Activated CD4-positive, alpha-beta T cell treated with anti-CD3 and anti-CD28 coated beads for 36 hours (primary cell): ENCODE measurements at regions of chr19 and their contacts with region 1.

Region 1: DNA sequence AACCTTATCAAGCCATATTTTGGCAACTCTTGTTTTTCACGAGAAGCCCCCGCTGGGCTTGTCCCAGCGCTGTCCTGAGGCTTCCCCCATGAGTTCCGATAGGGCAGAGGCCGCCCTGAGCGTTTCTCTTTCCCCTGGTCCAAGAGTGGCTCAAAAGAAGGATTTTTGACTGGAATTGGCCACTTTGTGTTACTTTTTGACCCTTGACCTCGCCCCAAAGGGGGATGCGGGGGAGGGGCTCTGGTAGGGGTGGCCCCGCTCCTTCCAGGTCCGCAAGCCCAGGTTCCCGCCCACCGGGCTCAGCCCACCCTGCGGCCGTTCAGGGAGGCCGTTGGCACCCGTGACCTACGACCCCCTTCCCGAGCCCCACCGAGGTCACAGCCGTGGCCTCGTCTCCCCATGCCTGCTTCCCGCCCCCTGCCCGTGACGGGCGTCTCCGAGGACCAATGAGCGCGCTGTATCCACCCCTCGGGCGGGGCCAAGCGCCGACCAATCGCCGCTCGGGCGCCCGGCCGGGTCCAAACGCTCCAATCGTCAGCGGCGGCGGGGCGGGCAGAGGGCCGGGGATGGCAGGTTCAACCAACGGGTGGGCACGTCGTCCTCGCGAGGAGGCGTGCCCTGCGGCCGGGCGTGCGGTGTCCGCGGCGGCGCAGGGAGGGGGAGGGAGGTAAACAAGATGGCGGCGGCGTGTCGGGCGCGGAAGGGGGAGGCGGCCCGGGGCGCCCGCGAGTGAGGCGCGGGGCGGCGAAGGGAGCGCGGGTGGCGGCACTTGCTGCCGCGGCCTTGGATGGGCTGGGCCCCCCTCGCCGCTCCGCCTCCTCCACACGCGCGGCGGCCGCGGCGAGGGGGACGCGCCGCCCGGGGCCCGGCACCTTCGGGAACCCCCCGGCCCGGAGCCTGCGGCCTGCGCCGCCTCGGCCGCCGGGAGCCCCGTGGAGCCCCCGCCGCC is at the start of gene STK11:
- DNase-seq: peak; percentile 100
- ATAC-seq: peak; percentile 97
- H3K4me3 Mint-ChIP-seq: peak within 1 kb of the TSS; percentile 93
- H3K27ac Mint-ChIP-seq: peak within 1 kb of the TSS; percentile 77
- H3K4me1 Mint-ChIP-seq: peaks cover 23% of the 10 kb centered on the region
- H3K27me3 Mint-ChIP-seq: no peaks in the 10 kb centered on the region
- total RNA-seq, gene STK11: 49.2 to 61.5 TPM

Region 2: GRCh38 chr19:1082172-1082927 is 123.0 kb before region 1 on chr19:
- CTCF ChIA-PET with region 1: no interaction called
- POLR2A ChIA-PET with region 1: interaction called, 5 read pairs
- intact Hi-C with region 1: loop called in 1 of 2 experiments (anchors 1 kb)
- DNase-seq: peak; percentile 96
- ATAC-seq: peak; percentile 71
- H3K4me3 Mint-ChIP-seq: no peak overlapping the region
- H3K27ac Mint-ChIP-seq: no peak overlapping the region
- H3K4me1 Mint-ChIP-seq: peaks cover 60% of the 10 kb centered on the region
- H3K27me3 Mint-ChIP-seq: no peaks in the 10 kb centered on the region

Region 3: DNA sequence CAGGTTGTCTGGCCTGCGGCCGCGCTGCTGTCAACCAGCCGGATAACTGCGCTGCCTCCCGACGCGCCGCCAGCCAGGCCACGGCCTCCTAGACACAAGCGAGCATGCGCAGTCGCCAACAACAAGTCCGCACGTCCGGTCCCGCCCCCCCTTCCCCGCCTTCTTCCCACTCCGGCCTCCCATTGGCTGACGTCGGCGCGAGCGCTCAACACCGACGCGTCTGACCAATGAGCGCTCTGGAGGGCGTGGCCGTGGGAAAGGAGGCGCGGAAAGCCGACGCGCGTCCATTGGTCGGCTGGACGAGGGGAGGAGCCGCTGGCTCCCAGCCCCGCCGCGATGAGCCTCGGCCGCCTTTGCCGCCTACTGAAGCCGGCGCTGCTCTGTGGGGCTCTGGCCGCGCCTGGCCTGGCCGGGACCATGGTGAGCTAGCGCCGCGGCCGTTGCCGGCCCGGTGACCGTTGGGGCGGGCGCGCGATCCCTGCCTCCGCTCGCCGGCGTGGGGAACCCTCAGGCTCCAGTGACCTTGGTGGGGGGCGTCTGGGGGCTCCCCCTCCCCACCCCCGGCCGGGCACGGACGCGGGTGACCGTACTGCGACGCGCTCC is 101.6 kb before region 1 on chr19 and contains the start of gene GPX4:
- CTCF ChIA-PET with region 1: no interaction called
- POLR2A ChIA-PET with region 1: interaction called, 9 read pairs
- intact Hi-C with region 1: loop called in 1 of 2 experiments (anchors 1 kb)
- DNase-seq: peak; percentile 100
- ATAC-seq: peak; percentile 81
- H3K4me3 Mint-ChIP-seq: peak within 1 kb of the TSS; percentile 71
- H3K27ac Mint-ChIP-seq: peak within 1 kb of the TSS; percentile 83
- H3K4me1 Mint-ChIP-seq: peaks cover 52% of the 10 kb centered on the region
- H3K27me3 Mint-ChIP-seq: no peaks in the 10 kb centered on the region
- total RNA-seq, gene GPX4: 192 to 218 TPM

Region 4: DNA sequence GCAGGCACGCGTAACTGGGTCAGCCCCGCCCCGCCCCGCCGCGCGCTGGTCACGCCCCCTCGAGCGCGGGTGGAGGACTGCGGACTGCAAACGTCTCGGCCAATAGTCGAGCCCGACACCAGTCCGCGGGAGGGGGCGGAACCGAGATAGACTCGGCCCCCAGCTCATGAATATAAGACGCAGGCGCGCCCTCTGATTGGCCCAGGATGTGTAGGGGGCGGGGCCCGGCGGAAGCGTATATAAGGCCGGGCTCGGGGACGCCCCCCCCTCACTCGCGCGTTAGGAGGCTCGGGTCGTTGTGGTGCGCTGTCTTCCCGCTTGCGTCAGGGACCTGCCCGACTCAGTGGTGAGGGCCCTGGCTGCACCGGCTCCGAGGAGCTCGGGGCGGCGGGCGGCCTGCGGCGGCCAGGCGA is 63.7 kb after region 1 on chr19 and contains the start of gene CIRBP:
- CTCF ChIA-PET with region 1: no interaction called
- POLR2A ChIA-PET with region 1: interaction called, 4 read pairs
- intact Hi-C with region 1: loop called in 1 of 2 experiments (anchors 1 kb)
- DNase-seq: peak; percentile 100
- ATAC-seq: peak; percentile 87
- H3K4me3 Mint-ChIP-seq: peak within 1 kb of the TSS; percentile 84
- H3K27ac Mint-ChIP-seq: peak within 1 kb of the TSS; percentile 87
- H3K4me1 Mint-ChIP-seq: peaks cover 66% of the 10 kb centered on the region
- H3K27me3 Mint-ChIP-seq: no peaks in the 10 kb centered on the region
- total RNA-seq, gene CIRBP: 123 to 188 TPM

Region 5: GRCh38 chr19:1875646-1876495 is 670.5 kb after region 1 on chr19:
- CTCF ChIA-PET with region 1: no interaction called
- POLR2A ChIA-PET with region 1: no interaction called
- intact Hi-C with region 1: no loop called
- DNase-seq: peak; percentile 95
- ATAC-seq: peak; percentile 96
- H3K4me3 Mint-ChIP-seq: peak overlapping the region; percentile 92
- H3K27ac Mint-ChIP-seq: peak overlapping the region; percentile 97
- H3K4me1 Mint-ChIP-seq: peaks cover 20% of the 10 kb centered on the region
- H3K27me3 Mint-ChIP-seq: no peaks in the 10 kb centered on the region